B cell (primary cell): ENCODE measurements at regions of chr21 and their contacts with region 1.

Region 1: DNA sequence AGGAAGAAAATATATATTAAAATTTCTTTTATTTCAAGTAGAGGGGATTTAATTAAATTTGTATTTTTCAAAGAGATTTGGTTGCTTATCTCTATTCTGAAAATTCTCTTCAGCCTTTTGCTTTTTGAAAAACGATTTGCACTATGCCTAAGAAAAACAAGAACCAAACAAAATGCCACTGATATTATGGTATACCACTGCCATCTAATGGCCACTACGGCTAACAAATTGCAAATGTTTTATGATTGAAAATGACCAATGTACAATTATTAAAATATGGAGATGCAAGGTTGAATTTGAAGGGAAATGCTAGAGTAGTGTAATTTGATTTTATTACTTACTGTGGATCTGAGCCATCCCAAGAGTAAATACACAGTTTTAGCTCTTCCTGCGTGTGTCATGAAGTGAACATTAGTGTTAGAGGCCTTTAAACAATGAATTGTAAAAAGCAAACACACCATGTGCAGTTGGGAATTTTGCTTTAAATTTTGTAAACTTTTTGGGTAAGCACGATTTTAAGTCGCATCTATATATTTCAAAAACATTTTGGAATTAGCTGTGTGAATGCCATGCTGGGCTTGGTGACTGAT is 137.4 kb upstream of the USP25 start:
- DNase-seq: peak; percentile 62
- ATAC-seq: peak; percentile 33
- H3K4me3 ChIP-seq: no peak overlapping the region
- H3K4me3 Mint-ChIP-seq: no peak overlapping the region
- H3K27ac ChIP-seq: no peak overlapping the region
- H3K27ac Mint-ChIP-seq: no peak overlapping the region
- H3K4me1 ChIP-seq: no peaks in the 10 kb centered on the region
- H3K4me1 Mint-ChIP-seq: no peaks in the 10 kb centered on the region
- H3K27me3 ChIP-seq: no peaks in the 10 kb centered on the region
- H3K27me3 Mint-ChIP-seq: peaks cover 9% of the 10 kb centered on the region
- CTCF ChIP-seq: peak; percentile 85

Region 2: DNA sequence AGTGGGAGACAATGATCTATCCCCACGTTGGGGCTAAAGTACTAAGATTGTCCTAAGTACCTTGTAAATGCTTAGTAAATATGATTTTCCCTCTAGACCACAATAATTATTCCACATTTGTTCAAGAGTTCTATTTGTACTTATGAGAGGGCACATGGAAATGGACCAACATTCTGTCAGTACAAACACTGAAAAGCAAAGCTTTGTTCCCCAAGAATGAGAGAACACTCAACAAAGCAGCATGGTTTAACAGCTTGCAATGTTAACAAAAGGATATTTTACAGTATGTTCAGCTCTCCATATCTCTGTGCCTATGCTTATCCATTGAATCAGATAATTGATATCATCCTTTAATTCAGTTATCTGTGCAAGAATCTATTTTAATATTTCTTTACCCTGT is 1341.0 kb before region 1 on chr21:
- CTCF ChIA-PET with region 1: interaction called, 13 read pairs
- POLR2A ChIA-PET with region 1: no interaction called
- intact Hi-C with region 1: loop called (anchors 1 kb)
- DNase-seq: no peak
- ATAC-seq: no peak
- H3K4me3 ChIP-seq: no peak overlapping the region
- H3K4me3 Mint-ChIP-seq: no peak overlapping the region
- H3K27ac ChIP-seq: no peak overlapping the region
- H3K27ac Mint-ChIP-seq: no peak overlapping the region
- H3K4me1 ChIP-seq: peaks cover 3% of the 10 kb centered on the region in 2 donors
- H3K4me1 Mint-ChIP-seq: peaks cover 3% of the 10 kb centered on the region
- H3K27me3 ChIP-seq: peaks cover 0 to 3% (median 0%) of the 10 kb centered on the region in 4 experiments
- H3K27me3 Mint-ChIP-seq: peaks cover 16% of the 10 kb centered on the region
- CTCF ChIP-seq: no peak

Region 3: GRCh38 chr21:14259747-14260146 is 1332.6 kb before region 1 on chr21:
- CTCF ChIA-PET with region 1: interaction called, 9 read pairs
- POLR2A ChIA-PET with region 1: no interaction called
- intact Hi-C with region 1: loop called (anchors 1 kb)
- DNase-seq: peak; percentile 53
- ATAC-seq: peak; percentile 36
- H3K4me3 ChIP-seq: no peak overlapping the region
- H3K4me3 Mint-ChIP-seq: no peak overlapping the region
- H3K27ac ChIP-seq: no peak overlapping the region
- H3K27ac Mint-ChIP-seq: no peak overlapping the region
- H3K4me1 ChIP-seq: no peaks in the 10 kb centered on the region
- H3K4me1 Mint-ChIP-seq: no peaks in the 10 kb centered on the region
- H3K27me3 ChIP-seq: no peaks in the 10 kb centered on the region
- H3K27me3 Mint-ChIP-seq: no peaks in the 10 kb centered on the region
- CTCF ChIP-seq: peak; percentile 81

Region 4: DNA sequence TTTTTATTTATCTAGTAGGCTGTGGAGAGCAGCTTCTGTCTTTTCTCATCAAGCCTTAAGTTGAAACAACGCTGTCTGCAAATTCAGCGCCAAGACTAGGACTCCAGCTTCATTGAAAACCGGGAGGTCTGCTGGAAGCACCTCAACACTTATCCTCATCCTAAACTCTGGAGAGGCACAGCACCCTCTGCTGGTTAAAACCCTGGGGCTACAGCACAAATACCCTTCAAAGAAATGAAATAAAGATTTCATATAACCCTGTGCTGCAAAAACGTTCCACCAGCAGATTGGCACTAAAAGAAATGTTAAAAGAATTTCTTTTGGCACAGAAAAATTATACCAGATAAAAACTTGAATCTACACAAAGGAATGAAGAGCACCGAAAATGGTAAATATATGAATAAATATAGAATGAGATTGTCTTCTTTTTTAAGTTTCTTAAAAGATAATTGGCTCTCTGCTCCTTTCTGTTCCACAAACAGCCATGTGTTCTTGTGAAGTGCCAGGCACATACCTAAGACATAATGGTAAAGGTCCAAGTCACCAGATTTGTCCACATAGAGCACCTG is 818.5 kb before region 1 on chr21:
- CTCF ChIA-PET with region 1: no interaction called
- POLR2A ChIA-PET with region 1: no interaction called
- intact Hi-C with region 1: loop called (anchors 10 kb)
- DNase-seq: peak; percentile 66
- ATAC-seq: peak; percentile 64
- H3K4me3 ChIP-seq: no peak overlapping the region
- H3K4me3 Mint-ChIP-seq: no peak overlapping the region
- H3K27ac ChIP-seq: no peak overlapping the region
- H3K27ac Mint-ChIP-seq: no peak overlapping the region
- H3K4me1 ChIP-seq: peaks cover 0 to 3% of the 10 kb centered on the region in 2 donors
- H3K4me1 Mint-ChIP-seq: peaks cover 17% of the 10 kb centered on the region
- H3K27me3 ChIP-seq: no peaks in the 10 kb centered on the region
- H3K27me3 Mint-ChIP-seq: no peaks in the 10 kb centered on the region
- CTCF ChIP-seq: peak; percentile 78

Region 5: GRCh38 chr21:14864211-14865021 is 728.0 kb before region 1 on chr21:
- CTCF ChIA-PET with region 1: interaction called, 7 read pairs
- POLR2A ChIA-PET with region 1: no interaction called
- intact Hi-C with region 1: loop called (anchors 5 kb)
- DNase-seq: peak; percentile 41
- ATAC-seq: peak; percentile 72
- H3K4me3 ChIP-seq: no peak overlapping the region
- H3K4me3 Mint-ChIP-seq: no peak overlapping the region
- H3K27ac ChIP-seq: no peak overlapping the region
- H3K27ac Mint-ChIP-seq: no peak overlapping the region
- H3K4me1 ChIP-seq: peaks cover 13 to 17% of the 10 kb centered on the region in 2 donors
- H3K4me1 Mint-ChIP-seq: peaks cover 42% of the 10 kb centered on the region
- H3K27me3 ChIP-seq: no peaks in the 10 kb centered on the region
- H3K27me3 Mint-ChIP-seq: no peaks in the 10 kb centered on the region
- CTCF ChIP-seq: peak; percentile 47

Region 6: GRCh38 chr21:15820327-15820726 is 228.0 kb after region 1 on chr21:
- CTCF ChIA-PET with region 1: no interaction called
- POLR2A ChIA-PET with region 1: no interaction called
- intact Hi-C with region 1: no loop called
- DNase-seq: no peak
- ATAC-seq: no peak
- H3K4me3 ChIP-seq: no peak overlapping the region
- H3K4me3 Mint-ChIP-seq: no peak overlapping the region
- H3K27ac ChIP-seq: no peak overlapping the region
- H3K27ac Mint-ChIP-seq: no peak overlapping the region
- H3K4me1 ChIP-seq: no peaks in the 10 kb centered on the region
- H3K4me1 Mint-ChIP-seq: no peaks in the 10 kb centered on the region
- H3K27me3 ChIP-seq: no peaks in the 10 kb centered on the region
- H3K27me3 Mint-ChIP-seq: no peaks in the 10 kb centered on the region
- CTCF ChIP-seq: no peak